Posterior cingulate gyrus (tissue), 11 donors: ENCODE measurements at regions of chrX and their contacts with region 1.

Region 1: GRCh38 chrX:101799387-101799786 is 132.4 kb downstream of the ZMAT1 start:
- DNase-seq: peak; percentile 51 to 94 (median 66)

Region 2: DNA sequence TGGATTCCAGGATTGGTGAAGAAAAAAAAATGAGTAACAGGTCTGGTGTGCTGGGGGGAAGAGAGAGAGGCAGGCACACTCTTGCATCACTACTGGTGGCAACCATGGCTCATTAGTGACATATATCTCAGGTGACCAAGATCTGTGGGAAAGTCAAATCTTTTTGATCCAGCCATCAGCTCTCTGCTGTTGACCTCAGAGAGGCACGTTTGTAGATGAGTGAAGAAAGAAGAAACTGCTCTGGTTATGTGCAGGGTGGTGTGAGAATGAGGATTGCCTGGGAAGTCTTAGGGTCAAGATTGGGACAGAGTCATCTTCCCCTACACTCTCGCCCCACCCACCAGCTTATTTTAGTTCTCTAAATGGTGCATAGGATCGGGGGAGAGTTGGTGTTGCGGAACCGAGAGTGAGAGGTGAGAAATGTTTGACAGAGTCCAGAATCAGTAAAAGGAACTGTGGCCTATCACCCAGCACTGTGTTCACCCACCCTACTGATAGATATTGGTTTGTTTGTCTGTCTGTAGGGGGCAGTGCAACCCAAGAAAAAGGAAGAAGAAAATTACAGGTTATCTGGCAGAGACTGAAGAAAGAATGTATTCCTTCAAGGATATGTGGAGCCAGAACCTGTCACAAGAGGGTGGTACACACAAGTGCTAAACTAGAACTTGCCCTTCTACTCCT is 203.5 kb before region 1 on chrX:
- intact Hi-C with region 1: loop called (anchors 5 kb)
- DNase-seq: peak in 2 of 10 donors; percentile 2 to 8